A673 (cell line): ENCODE measurements at regions of chr12 and their contacts with region 1.

Region 1: GRCh38 chr12:120116792-120117651 is 469 bp upstream of the RAB35 start:
- DNase-seq: peak; percentile 96
- H3K4me3 ChIP-seq: peak overlapping the region; percentile 98
- H3K27ac ChIP-seq: peak overlapping the region; percentile 88
- H3K4me1 ChIP-seq: peaks cover 13% of the 10 kb centered on the region
- H3K27me3 ChIP-seq: no peaks in the 10 kb centered on the region
- CTCF ChIP-seq: no peak

Region 2: DNA sequence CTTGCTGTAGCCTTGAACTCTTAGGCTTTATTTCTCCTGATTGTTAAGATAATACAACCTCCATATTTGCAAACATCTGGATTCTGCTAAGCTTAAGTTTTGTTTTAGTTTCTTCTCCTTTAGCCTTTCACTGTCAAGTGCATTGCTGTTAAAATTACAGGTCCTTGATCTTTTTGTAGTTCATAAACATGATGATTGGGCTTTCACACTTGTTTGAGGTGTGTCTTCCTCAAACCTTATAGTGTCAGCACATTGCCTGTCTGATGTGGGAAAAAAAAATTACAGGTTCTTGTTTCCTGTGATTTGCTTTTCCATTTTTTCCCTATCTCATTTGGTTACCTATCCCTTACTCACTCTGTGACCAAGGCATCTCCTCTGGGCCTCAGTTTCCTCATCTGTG is 68.8 kb before region 1 on chr12:
- CTCF ChIA-PET with region 1: no interaction called
- POLR2A ChIA-PET with region 1: no interaction called
- intact Hi-C with region 1: no loop called
- DNase-seq: no peak
- H3K4me3 ChIP-seq: no peak overlapping the region
- H3K27ac ChIP-seq: no peak overlapping the region
- H3K4me1 ChIP-seq: no peaks in the 10 kb centered on the region
- H3K27me3 ChIP-seq: no peaks in the 10 kb centered on the region
- CTCF ChIP-seq: no peak

Region 3: DNA sequence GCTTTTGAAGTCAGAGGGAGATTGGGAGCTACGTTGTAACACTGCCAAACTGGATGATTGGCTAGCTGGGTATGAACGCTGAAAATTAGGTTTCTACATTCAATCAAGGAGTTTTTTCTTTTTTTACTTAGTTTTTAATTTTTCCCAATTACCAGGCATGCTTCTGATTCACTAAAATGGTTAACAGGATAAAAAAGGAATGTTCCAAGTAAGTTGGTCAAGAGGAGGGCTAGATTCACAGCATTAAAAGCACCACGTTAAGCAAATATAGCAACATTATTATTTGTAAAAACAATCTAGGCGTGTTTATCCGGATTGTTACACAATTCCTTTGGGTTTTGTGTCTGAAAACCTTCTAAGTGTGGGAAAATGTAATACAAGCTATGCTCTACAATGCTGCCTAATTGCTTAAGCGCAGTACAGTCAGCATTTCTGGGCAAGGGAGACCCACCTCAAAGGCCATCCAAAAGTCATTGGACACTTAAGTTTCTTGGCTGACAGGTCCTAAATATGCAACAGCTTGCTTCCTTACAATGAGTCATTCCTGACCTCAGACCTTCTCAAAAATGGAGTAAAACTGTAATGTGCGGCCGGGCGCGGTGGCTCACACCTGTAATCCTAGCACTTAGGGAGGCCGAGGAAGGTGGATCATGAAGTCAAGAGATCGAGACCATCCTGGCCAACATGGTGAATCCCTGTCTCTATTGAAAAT is 82.7 kb after region 1 on chr12:
- CTCF ChIA-PET with region 1: no interaction called
- POLR2A ChIA-PET with region 1: interaction called, 12 read pairs
- intact Hi-C with region 1: no loop called
- DNase-seq: no peak
- H3K4me3 ChIP-seq: peak overlapping the region; percentile 97
- H3K27ac ChIP-seq: peak overlapping the region; percentile 95
- H3K4me1 ChIP-seq: peaks cover 22% of the 10 kb centered on the region
- H3K27me3 ChIP-seq: no peaks in the 10 kb centered on the region
- CTCF ChIP-seq: no peak

Region 4: GRCh38 chr12:120265473-120266179 is 148.6 kb after region 1 on chr12 and contains the start of gene PXN:
- CTCF ChIA-PET with region 1: interaction called, 5 read pairs
- POLR2A ChIA-PET with region 1: no interaction called
- intact Hi-C with region 1: loop called (anchors 10 kb)
- DNase-seq: peak; percentile 86
- H3K4me3 ChIP-seq: peak within 1 kb of the TSS; percentile 80
- H3K27ac ChIP-seq: peak within 1 kb of the TSS; percentile 71
- H3K4me1 ChIP-seq: peaks cover 28% of the 10 kb centered on the region
- H3K27me3 ChIP-seq: no peaks in the 10 kb centered on the region
- CTCF ChIP-seq: peak; percentile 74
- total RNA-seq, gene PXN: 110 and 127 TPM in 2 replicates

Region 5: DNA sequence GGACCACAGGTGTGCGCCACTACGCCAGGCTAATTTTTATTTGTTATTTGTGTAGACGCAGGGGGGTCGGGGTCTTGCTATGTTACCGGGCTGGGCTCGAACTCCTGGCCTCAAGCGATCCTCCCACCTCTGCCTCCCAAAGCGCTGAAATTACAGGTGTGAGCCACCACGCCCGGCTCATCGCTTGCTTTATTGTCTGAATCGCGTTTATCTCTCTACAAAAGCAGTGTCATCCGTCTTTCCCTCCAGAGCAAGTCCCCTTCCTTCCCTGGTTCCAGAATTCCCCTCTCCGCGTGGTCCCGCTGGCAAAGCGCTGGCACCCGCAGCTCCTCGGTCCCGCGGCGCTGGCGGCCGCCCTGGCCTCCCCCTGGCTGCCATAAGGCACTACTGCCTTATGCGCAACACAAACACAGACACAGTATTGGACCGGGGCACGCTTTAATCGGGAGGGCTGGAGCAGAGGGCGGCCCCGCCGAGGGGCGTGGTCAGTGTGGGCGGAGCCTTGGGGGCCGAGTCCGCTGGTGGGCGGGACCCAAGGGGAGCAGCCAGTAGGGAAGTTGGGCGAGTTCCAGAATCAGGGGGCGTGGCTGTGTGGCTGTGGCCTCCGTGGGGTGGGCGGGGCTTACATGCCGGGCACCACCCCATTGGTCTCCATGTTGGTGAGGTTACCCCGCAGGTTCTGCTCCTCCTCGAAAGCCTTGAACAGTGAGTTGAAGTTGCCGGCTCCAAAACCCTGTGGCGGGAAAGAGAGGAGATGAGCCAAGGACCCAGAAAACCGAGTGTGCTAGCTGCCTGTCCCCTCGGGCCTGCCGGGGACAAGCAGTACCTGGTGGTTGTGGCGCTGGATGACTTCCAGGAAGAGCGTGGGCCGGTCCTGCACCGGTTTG is 1722.3 kb after region 1 on chr12:
- CTCF ChIA-PET with region 1: no interaction called
- POLR2A ChIA-PET with region 1: interaction called, 12 read pairs
- intact Hi-C with region 1: no loop called
- DNase-seq: peak; percentile 98
- H3K4me3 ChIP-seq: peak overlapping the region; percentile 58
- H3K27ac ChIP-seq: peak overlapping the region; percentile 68
- H3K4me1 ChIP-seq: peaks cover 5% of the 10 kb centered on the region
- H3K27me3 ChIP-seq: no peaks in the 10 kb centered on the region
- CTCF ChIP-seq: peak; percentile 52